Heart left ventricle (tissue), 16 donors: ENCODE measurements at regions of chrX and their contacts with region 1.

Region 1: GRCh38 chrX:11143931-11144678 is 33.0 kb downstream of the HCCS start:
- DNase-seq: peak in 4 of 5 donors; percentile 32 to 43 (median 38)
- ATAC-seq: peak in 3 of 4 donors; percentile 74 to 88 (median 85)
- H3K4me3 ChIP-seq: no peak overlapping the region
- H3K27ac ChIP-seq: no peak overlapping the region
- H3K4me1 ChIP-seq: peaks cover 0 to 4% (median 0%) of the 10 kb centered on the region in 12 donors
- H3K27me3 ChIP-seq: peaks cover 0 to 8% (median 0%) of the 10 kb centered on the region in 9 donors
- CTCF ChIP-seq: peak; percentile 37 to 78 (median 60)
- POLR2A ChIP-seq: no peak

Region 2: DNA sequence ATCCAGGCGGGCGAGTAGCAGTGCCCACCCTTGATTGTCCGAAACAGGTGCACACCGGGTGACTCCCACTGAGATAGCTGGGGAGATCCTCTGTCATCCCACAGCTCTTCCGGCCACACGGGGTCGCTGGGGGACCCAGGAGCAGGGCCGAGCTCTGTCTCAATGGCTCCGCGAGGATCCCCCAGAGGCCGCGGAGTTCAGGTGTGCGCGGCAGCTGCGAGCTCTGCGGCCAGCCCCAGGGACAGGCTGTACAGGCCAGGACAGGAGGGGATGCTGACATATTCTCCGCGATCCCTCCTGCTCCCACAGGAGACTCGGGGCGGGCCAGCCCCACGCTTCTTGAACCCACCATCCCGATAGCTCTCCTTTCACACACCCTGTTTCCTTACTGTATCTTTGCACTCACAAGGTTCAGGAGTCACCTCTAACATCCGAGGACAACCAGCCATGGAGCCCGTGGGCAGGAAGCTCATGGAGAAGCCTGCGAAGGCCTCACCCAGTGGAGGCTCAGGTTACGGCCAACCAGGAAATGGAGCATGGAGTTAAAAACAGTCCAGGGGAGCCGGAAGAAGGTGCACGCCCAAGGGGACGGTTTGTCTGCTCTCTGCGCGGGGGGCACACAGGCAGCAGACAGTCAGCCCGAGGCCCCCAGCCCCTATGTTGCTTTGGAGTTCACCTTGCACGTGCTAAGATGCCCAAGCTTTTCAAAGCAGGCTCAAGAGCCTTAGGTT is 71.3 kb after region 1 on chrX:
- intact Hi-C with region 1: no loop called
- DNase-seq: no peak
- ATAC-seq: peak in 1 of 4 donors; percentile 18
- H3K4me3 ChIP-seq: no peak overlapping the region
- H3K27ac ChIP-seq: no peak overlapping the region
- H3K4me1 ChIP-seq: no peaks in the 10 kb centered on the region
- H3K27me3 ChIP-seq: no peaks in the 10 kb centered on the region
- CTCF ChIP-seq: no peak
- POLR2A ChIP-seq: no peak

Region 3: DNA sequence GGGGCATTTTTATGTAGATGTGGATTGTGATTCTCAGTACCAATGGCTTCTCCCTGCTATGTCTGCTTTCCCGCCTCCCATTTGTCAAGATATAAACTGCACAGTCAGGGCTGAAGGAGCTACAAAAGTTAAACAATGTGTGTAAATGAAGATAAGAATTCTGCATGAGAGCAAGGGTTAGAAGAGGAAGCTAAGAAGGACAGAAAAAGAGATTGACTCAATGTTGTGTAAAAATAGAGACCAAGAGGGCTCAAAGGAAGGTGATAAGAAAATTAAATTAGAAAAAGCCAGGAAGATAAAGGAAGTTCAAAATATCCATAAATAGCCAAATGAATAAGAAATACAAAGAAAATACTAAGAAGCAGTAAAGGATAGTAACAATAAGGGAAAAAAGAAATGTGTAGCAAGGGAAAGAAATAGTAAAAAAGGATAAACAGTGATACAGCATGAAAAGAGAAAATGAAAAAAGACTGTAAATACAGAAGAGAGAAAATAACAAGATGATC is 231.6 kb after region 1 on chrX:
- intact Hi-C with region 1: loop called in 1 of 10 experiments (anchors 10 kb)
- DNase-seq: no peak
- ATAC-seq: no peak
- H3K4me3 ChIP-seq: no peak overlapping the region
- H3K27ac ChIP-seq: no peak overlapping the region
- H3K4me1 ChIP-seq: peaks cover 0 to 11% (median 0%) of the 10 kb centered on the region in 12 donors
- H3K27me3 ChIP-seq: peaks cover 0 to 16% (median 0%) of the 10 kb centered on the region in 9 donors
- CTCF ChIP-seq: no peak
- POLR2A ChIP-seq: no peak

Region 4: DNA sequence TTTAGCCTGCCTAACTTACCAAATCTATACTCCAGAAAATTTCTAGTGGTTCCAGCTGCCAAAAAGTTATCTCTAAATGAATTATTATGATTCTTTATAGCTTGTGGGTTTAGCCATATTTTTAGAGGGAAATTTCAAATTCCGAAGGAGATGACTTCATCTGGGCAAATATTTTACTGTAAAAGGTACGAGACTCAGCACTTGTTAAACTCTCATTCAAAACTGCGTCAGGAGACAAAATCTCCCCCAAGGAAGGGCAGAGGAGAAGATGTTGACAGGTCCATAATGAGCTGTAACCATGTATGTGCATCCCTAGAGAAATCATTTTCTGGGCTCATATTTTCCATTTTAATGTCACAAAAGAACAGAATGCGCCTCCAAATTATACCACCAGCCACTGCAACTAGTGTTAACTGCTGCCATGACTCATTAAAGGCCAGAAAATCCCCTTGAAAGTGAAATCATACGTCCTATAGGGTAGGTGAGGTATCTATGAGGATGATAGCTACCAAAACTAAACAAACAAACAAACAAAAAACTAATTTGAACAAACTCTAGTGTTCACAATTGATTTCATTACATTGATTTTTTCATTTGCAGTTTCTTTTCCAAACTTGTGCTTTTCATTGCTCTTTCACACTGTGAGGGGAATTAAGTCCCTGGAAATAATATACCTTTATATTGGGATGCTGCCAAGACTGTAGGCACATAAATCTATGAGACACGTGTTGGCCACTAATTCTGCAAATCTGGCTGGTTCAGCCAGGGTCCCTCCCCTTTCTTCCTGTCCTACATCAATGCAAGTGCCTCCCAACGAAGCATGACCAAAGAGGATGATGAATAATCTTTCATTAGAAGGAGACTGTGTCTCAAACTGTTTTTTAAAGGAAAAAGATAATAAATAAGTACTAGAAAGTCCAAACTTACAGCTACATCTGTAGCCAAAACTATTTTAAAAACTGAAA is 435.8 kb after region 1 on chrX:
- intact Hi-C with region 1: no loop called
- DNase-seq: no peak
- ATAC-seq: no peak
- H3K4me3 ChIP-seq: no peak overlapping the region
- H3K27ac ChIP-seq: no peak overlapping the region
- H3K4me1 ChIP-seq: no peaks in the 10 kb centered on the region
- H3K27me3 ChIP-seq: no peaks in the 10 kb centered on the region
- CTCF ChIP-seq: no peak
- POLR2A ChIP-seq: no peak

Region 5: DNA sequence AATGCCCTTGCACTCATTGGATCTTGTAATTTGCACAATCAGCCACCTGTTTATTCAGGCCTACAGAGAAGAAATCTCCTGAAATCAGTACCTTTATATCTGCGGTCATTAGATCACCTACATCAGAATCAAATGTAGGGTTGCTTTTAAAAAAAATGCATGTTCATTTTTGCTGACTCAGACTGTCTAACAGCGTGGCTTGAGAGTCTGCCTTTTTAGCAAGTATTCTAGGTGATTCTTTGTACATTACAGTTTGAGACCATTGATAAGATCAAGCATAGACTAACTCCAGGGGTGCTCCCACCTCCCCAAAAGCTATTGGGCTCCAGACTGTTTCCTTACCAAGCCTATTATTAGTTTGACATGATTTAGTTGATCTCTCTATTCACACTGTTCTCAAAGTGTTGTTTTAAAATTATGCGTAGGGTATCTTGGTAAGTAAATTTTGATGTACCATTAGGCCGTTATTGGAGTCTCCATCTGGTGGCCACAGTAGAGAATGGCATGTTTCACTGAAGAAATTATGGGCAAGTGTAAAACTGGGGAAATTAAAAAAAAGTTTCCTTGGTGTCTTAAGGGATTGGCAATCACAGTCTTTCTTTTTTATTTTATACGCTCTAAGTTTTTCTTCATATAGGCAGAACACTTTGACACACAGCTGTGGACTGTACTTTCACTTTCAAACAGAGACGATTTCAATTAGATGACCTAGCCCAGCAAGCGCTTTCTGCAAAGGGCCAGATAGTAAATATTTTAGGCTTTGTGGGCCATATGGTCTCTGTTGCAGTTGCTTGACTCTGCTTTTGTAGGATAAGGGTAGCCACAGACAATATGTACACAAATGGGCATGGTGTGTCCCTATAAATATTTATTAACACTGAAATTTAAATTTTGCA is 580.3 kb after region 1 on chrX:
- intact Hi-C with region 1: loop called in 2 of 10 experiments (anchors 10 kb)
- DNase-seq: no peak
- ATAC-seq: no peak
- H3K4me3 ChIP-seq: no peak overlapping the region
- H3K27ac ChIP-seq: no peak overlapping the region
- H3K4me1 ChIP-seq: no peaks in the 10 kb centered on the region
- H3K27me3 ChIP-seq: peaks cover 0 to 17% (median 0%) of the 10 kb centered on the region in 9 donors
- CTCF ChIP-seq: peak; percentile 35 to 75 (median 66)
- POLR2A ChIP-seq: no peak

Region 6: GRCh38 chrX:11770320-11770719 is 626.2 kb after region 1 on chrX:
- intact Hi-C with region 1: loop called in 4 of 10 experiments (anchors 5 to 10 kb)
- DNase-seq: peak in 1 of 5 donors; percentile 21
- ATAC-seq: peak in 3 of 4 donors; percentile 34 to 60 (median 57)
- H3K4me3 ChIP-seq: no peak overlapping the region
- H3K27ac ChIP-seq: no peak overlapping the region
- H3K4me1 ChIP-seq: no peaks in the 10 kb centered on the region
- H3K27me3 ChIP-seq: no peaks in the 10 kb centered on the region
- CTCF ChIP-seq: peak; percentile 64 to 85 (median 74)
- POLR2A ChIP-seq: no peak